HEK293 (cell line): ENCODE measurements at regions of chr9 and their contacts with region 1.

Region 1: DNA sequence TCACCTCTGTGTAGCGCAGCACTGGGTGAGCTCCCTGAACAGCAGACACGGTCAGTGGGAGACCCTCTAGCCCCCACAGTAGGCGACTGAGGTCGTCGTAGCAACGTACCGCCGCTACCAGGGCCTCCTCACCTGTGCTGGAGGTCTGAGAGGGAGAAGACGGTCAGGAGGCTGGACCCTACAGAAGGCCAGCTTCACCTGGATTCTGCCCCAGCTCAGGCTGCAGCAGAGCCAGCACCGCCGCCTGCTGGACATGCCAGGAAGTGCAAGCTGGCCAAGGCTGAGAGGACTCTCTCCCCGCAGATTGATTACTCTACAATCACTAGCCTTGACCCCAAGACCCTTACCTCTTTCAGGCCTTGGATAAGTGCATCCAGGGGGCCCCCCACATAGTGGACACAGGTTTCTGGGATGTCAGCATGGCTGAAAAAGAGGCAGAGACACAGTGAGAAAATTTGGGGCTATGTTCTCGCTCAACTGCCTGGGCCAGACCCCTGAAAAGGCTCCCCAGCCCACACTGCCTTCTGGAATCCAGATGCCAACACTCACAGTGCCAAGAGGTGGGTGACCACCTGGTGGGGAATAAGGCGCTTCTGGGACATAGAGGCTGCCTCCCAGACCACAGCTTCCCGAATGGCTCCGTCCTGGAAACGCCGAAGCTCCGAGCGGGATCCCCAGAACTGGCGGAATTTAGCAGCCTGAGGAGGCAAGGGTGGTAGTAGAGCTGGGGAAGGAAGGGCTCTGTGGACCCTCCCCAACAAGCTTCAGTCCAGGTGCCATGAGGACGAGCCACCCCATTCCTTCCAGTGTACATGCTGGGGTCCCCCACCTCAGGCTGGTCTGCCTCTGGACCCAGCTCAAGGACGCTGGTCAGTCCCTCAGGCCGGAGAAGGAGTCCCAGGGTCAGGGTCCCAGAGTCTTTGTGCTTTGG is 6.9 kb downstream of the NOL6 start:
- H3K4me3 ChIP-seq: no peak overlapping the region
- H3K27ac ChIP-seq: no peak overlapping the region
- H3K4me1 ChIP-seq: no peaks in the 10 kb centered on the region
- CTCF ChIP-seq: peak; percentile 78

Region 2: GRCh38 chr9:33290247-33291030 is 176.4 kb before region 1 on chr9 and contains the start of gene NFX1:
- CTCF ChIA-PET with region 1: interaction called, 18 read pairs
- POLR2A ChIA-PET with region 1: interaction called, 3 read pairs
- H3K4me3 ChIP-seq: peak within 1 kb of the TSS; percentile 84
- H3K27ac ChIP-seq: peak within 1 kb of the TSS; percentile 87
- H3K4me1 ChIP-seq: no peaks in the 10 kb centered on the region
- CTCF ChIP-seq: no peak

Region 3: DNA sequence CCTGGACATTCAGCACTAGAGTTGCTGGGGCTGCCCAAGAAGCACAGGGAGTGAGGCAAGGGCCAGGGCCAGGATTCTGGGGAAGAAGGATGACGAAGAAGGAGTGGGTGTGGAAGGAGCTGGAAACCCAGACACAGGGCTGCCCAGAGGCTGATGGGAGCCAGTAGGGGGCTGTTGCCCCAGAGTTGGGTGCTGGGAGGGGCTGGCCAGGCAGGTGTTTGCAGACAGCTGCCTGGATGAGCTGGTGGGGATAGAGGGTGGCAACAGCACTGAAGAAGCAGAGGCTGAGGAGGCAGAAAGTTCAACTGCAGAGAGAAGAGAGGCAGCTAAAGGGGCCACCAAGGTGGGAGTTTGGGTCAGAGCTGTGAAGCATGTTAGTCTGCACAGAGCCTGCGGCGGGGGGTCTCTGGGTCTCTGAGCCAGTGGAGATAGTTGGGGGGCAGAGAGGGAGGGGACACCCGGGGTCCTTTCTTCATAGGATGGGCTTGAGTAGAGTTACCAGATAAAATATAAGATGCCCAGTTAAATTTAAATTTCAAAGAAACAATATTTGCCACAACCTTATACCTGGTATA is 62.0 kb before region 1 on chr9:
- CTCF ChIA-PET with region 1: interaction called, 61 read pairs
- POLR2A ChIA-PET with region 1: interaction called, 9 read pairs
- H3K4me3 ChIP-seq: no peak overlapping the region
- H3K27ac ChIP-seq: no peak overlapping the region
- H3K4me1 ChIP-seq: no peaks in the 10 kb centered on the region
- CTCF ChIP-seq: no peak

Region 4: DNA sequence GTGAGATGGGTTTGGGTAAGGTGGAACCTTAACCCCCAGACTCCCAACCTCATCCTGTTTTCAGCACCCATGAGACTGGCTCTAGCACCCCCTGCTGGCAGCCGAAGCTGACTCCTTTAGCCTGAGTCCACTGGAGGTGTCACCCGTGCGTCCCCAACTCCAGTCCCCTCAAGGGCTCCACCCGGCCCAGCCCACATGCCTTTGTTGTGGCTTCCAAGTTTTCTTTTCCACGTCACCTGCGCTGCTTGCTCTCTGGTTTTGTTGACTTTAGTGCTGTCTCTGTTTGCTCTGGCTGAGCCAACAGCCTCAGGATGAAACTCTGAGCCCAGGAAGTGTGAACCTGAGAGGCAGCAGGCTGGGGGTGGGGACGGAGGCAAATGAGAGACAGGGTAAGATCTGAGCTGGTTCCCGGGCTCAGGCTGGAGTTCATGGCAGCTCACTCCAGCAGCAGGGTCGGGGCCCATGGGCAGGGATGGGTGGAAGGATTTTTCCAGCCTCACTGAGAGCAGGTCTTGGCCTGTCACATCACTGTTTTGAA is 51.3 kb before region 1 on chr9:
- CTCF ChIA-PET with region 1: interaction called, 21 read pairs
- POLR2A ChIA-PET with region 1: interaction called, 3 read pairs
- H3K4me3 ChIP-seq: no peak overlapping the region
- H3K27ac ChIP-seq: no peak overlapping the region
- H3K4me1 ChIP-seq: 0 out of 2 replicates have a peak, but pooled peaks cover 3% of the 10 kb centered on the region
- CTCF ChIP-seq: peak; percentile 72

Region 5: GRCh38 chr9:33446946-33447798 is 19.7 kb before region 1 on chr9 and contains the start of gene AQP3:
- CTCF ChIA-PET with region 1: interaction called, 176 read pairs
- POLR2A ChIA-PET with region 1: no interaction called
- H3K4me3 ChIP-seq: peak within 1 kb of the TSS; percentile 46
- H3K27ac ChIP-seq: no peak within 1 kb of the TSS; the same call in 1 of the 2 replicates
- H3K4me1 ChIP-seq: no peaks in the 10 kb centered on the region; the same call in 1 of the 2 replicates
- CTCF ChIP-seq: peak; percentile 59

Region 6: DNA sequence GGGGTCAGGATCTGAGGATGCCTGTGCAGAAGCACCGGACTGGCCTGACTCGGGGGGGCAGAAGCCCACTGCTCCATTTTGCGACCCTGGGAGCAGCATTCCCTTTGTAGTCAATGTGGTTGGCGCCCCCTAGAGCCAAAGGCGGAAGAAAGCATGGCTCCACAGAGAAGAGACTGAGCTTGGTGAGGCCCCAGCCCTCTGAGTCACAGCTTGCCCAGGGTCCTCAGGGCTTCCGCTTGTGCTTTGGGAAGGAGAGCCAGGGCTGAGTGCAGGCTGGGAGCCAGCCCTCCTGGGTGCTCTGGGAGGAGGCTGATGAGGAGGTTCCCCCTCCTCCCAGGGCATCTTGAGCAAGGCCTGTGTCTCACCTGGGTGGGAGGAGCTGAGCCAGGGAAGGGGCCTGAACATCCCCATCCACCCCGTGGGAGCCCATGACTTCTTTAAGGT is 14.0 kb before region 1 on chr9:
- CTCF ChIA-PET with region 1: interaction called, 176 read pairs
- POLR2A ChIA-PET with region 1: interaction called, 8 read pairs
- H3K4me3 ChIP-seq: no peak overlapping the region
- H3K27ac ChIP-seq: no peak overlapping the region
- H3K4me1 ChIP-seq: no peaks in the 10 kb centered on the region
- CTCF ChIP-seq: 0 out of 2 replicates have a peak, but pooled peaks have one; percentile 33

Region 7: GRCh38 chr9:33517373-33517772 is 50.5 kb after region 1 on chr9:
- CTCF ChIA-PET with region 1: interaction called, 12 read pairs
- POLR2A ChIA-PET with region 1: no interaction called
- H3K4me3 ChIP-seq: no peak overlapping the region
- H3K27ac ChIP-seq: no peak overlapping the region
- H3K4me1 ChIP-seq: no peaks in the 10 kb centered on the region
- CTCF ChIP-seq: no peak